Right cardiac atrium (tissue), 5 donors: ENCODE measurements at regions of chr9 and their contacts with region 1.

Region 1: DNA sequence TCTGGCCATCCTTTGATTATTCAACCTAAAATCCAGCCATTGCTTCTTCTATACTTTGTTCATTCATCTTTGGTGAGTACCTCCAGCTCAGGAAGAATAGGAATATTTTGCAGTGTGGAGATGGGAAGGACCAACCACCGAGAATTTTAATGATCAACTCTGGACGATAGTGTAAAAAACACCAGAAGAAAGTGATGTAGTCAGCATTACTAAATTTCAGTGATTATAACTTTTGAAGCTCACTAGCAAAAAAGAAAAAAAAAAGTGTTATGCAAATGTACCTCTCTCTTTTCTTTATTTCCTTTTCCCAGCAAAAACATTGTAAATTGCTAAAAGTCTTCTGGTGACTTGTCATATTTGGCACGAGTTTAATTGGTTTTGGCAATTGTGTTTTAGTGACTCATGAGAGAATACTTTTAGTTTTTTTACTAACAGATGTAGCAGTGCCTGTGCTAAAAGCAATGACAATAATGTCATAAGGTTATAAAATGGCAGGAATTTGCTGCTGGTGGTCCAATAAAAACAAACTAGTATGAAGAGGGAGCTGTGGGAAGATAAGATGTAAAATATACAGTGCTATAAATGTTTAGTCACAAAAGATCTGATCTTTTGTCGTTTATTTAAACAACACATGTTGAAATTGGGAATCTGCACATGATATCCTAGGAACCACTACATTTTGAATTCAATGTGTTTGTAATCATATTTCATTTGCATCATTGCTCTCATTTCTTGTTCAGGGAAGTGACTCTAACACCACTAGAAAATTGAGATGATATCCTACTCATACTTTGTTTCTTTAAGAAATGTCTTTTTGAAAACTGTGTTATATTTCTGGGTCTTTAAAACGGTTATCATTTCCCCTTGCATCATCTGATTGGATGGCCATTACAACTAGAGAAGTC is 81.3 kb upstream of the ERCC6L2 start:
- DNase-seq: no peak
- ATAC-seq: peak; percentile 85 to 86
- H3K4me3 ChIP-seq: no peak overlapping the region
- H3K27ac ChIP-seq: no peak overlapping the region
- H3K4me1 ChIP-seq: no peaks in the 10 kb centered on the region
- H3K27me3 ChIP-seq: no peaks in the 10 kb centered on the region

Region 2: GRCh38 chr9:95383185-95383673 is 410.9 kb before region 1 on chr9:
- intact Hi-C with region 1: no loop called
- DNase-seq: no peak
- ATAC-seq: no peak
- H3K4me3 ChIP-seq: no peak overlapping the region
- H3K27ac ChIP-seq: no peak overlapping the region
- H3K4me1 ChIP-seq: no peaks in the 10 kb centered on the region
- H3K27me3 ChIP-seq: no peaks in the 10 kb centered on the region

Region 3: DNA sequence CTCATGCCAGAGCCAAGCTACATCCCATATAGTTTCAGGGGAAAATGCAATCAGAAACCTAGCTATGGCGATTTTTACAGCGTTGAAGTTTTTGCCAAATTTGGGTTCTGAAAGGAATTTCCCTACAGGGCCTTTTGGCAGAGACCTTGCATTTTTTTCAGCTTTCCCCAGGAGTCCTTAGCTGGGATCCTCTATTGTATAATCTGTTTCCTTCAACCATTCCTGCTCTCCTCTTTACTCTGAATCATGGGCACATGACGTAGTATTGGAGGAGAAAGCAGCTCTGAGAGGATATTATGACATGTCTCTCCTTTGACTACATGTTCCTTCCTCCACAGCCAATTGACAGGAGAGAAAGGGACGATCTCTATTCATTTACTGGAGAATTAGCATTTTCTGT is 37.2 kb before region 1 on chr9:
- intact Hi-C with region 1: loop called in 1 of 4 experiments (anchors 5 kb)
- DNase-seq: no peak
- ATAC-seq: peak; percentile 75 to 85
- H3K4me3 ChIP-seq: no peak overlapping the region
- H3K27ac ChIP-seq: peak overlapping the region; percentile 36
- H3K4me1 ChIP-seq: peaks cover 7% of the 10 kb centered on the region
- H3K27me3 ChIP-seq: no peaks in the 10 kb centered on the region